ENCODE measurements at regions of chrX and their contacts with region 1.

Region 1: DNA sequence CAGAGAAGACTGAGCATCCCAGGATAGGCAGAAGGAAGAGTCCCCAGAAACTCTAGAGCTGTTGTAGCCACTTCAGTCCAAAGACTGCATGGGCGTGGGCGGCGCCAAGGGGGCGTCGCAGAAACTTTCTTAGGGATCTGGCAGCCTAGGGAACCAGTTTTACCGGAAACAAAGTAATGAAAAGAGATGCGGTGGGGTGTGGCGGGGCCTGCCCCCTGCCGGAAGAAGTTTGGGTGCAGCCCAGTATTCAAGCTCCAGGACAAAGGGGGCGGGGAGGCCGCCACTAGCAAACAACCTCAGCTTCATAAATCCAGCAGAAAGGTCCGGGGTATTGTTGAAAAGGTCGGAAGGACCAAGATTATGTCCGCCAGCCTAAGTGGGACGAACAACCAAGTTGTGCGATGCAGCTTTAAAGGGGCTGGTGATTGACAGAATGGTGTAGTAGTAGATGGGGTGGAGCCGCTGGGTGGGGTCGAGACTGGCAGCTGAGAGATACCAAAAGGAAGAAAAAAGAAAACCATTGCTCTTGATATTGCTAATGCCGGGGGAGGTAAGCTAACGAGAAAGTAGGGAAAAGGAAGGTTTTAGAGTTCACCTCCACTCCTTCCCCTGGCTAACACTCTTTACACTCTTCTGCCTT is 190.5 kb downstream of the RRAGB start:
- DNase-seq: peak; percentile 71
- ATAC-seq: peak; percentile 75
- H3K4me3 Mint-ChIP-seq: peak overlapping the region; percentile 79
- H3K27ac Mint-ChIP-seq: peak overlapping the region; percentile 90
- H3K4me1 Mint-ChIP-seq: peaks cover 17% of the 10 kb centered on the region
- H3K27me3 Mint-ChIP-seq: no peaks in the 10 kb centered on the region

Region 2: DNA sequence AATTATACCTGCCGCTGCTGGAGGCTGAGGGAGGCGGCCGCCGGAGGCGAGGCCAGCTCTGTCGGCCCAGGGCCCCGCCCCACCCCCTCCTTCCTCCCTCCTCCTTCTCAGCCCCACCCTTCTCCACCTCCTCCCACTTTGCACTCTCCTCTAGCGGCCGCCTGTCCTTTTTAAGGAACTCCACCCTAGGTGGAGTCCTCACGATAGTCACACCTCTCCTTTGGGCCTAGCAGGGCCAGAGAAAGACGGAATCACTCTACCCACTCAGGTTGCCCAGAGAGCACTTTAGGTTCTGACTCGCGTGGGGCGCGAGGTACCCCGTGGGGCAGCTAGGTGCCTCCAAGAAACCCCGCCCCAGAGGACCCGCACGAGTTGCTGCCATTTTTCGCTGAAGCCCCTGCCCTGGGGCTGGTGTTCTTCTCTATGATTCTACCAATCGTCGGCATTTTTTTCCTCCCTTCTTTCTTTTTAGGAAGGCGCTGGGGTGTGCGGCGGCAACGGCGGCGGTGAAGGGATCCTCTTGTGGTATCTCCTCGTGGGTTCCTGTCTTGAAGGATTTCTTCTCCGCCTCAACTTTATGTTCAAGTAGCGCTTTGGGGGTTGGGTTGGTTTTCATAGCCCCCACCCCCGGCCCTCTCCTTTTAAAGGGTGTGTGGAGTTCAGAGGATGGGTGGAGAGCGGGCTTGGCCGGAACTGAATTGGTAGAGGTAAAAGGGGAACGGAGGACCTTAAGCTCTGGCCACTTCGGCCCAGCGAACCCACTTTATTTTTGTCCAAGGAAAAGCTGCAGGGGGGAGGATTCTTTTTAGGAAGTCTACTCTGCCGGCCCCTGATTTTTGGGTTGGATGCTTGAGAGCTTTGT is 324.4 kb after region 1 on chrX and contains the start of gene KLF8:
- CTCF ChIA-PET with region 1: no interaction called
- POLR2A ChIA-PET with region 1: no interaction called
- intact Hi-C with region 1: loop called in 1 of 2 experiments (anchors 2 kb)
- DNase-seq: peak; percentile 70
- ATAC-seq: peak; percentile 84
- H3K4me3 Mint-ChIP-seq: peak within 1 kb of the TSS; percentile 70
- H3K27ac Mint-ChIP-seq: peak within 1 kb of the TSS; percentile 60
- H3K4me1 Mint-ChIP-seq: peaks cover 20% of the 10 kb centered on the region
- H3K27me3 Mint-ChIP-seq: no peaks in the 10 kb centered on the region
- total RNA-seq, gene KLF8: 4.9 to 5.4 TPM

Measured in activated CD4-positive, alpha-beta T cell treated with anti-CD3 and anti-CD28 coated beads for 36 hours (primary cell).